ENCODE measurements at regions of chr16 and their contacts with region 1.

Region 1: GRCh38 chr16:58814348-58814801 is 80.3 kb upstream of the GOT2 start:
- DNase-seq: peak; percentile 63
- H3K4me3 ChIP-seq: peak overlapping the region in 2 of 3 experiments; percentile 17 to 59
- H3K27ac ChIP-seq: no peak overlapping the region
- H3K4me1 ChIP-seq: no peaks in the 10 kb centered on the region
- H3K27me3 ChIP-seq: no peaks in the 10 kb centered on the region
- CTCF ChIP-seq: peak; percentile 88 to 93
- POLR2A ChIP-seq: no peak

Region 2: GRCh38 chr16:59249011-59249410 is 434.6 kb after region 1 on chr16:
- CTCF ChIA-PET with region 1: interaction called, 10 read pairs
- POLR2A ChIA-PET with region 1: no interaction called
- dilution Hi-C with region 1: no loop called
- intact Hi-C with region 1: no loop called
- DNase-seq: peak; percentile 9
- H3K4me3 ChIP-seq: no peak overlapping the region
- H3K27ac ChIP-seq: no peak overlapping the region
- H3K4me1 ChIP-seq: no peaks in the 10 kb centered on the region
- H3K27me3 ChIP-seq: no peaks in the 10 kb centered on the region
- CTCF ChIP-seq: no peak
- POLR2A ChIP-seq: no peak

Region 3: DNA sequence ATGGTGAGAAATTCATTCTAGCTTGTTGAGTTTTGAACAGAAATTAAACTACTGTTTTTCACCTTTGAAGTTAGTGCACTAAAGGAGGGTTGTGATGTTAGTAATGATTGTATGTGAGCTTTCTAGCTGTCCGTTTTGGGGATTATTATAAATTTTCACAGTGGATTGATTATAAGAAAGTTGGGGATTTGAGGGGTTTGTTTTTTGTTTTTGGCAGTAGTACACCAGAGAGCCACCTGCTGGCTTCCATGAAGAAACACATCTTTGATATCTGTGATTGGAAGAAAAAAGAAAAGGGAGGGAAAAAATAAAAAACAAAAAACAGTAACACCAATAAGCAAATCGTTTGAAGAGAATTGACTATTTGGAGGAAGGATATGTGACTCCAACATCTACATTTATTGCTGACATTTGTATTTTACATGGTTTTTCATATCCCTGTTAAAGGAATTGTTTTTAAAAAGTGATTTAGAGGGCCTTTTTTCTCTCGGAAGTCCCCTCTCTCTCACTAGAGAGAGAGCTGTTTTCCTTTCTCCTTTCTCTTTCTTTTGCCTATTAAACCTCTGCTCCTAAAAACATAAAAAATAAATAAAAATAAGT is 1389.2 kb after region 1 on chr16:
- CTCF ChIA-PET with region 1: interaction called, 24 read pairs
- POLR2A ChIA-PET with region 1: no interaction called
- dilution Hi-C with region 1: no loop called
- intact Hi-C with region 1: loop called (anchors 1 kb)
- DNase-seq: peak; percentile 49
- H3K4me3 ChIP-seq: no peak overlapping the region
- H3K27ac ChIP-seq: no peak overlapping the region
- H3K4me1 ChIP-seq: no peaks in the 10 kb centered on the region
- H3K27me3 ChIP-seq: no peaks in the 10 kb centered on the region
- CTCF ChIP-seq: peak; percentile 30 to 45
- POLR2A ChIP-seq: no peak